Testis (tissue), 5 donors: ENCODE measurements at regions of chr11 and their contacts with region 1.

Region 1: GRCh38 chr11:12893787-12894672 is 115.1 kb upstream of the RASSF10 start:
- DNase-seq: peak; percentile 71
- H3K4me3 ChIP-seq: no peak overlapping the region
- H3K27ac ChIP-seq: no peak overlapping the region
- H3K4me1 ChIP-seq: peaks cover 10% of the 10 kb centered on the region
- H3K27me3 ChIP-seq: no peaks in the 10 kb centered on the region
- CTCF ChIP-seq: peak; percentile 83 to 91 (median 90)
- POLR2A ChIP-seq: no peak

Region 2: GRCh38 chr11:12331239-12331874 is 562.7 kb before region 1 on chr11:
- intact Hi-C with region 1: loop called (anchors 5 kb)
- DNase-seq: peak; percentile 91
- H3K4me3 ChIP-seq: no peak overlapping the region
- H3K27ac ChIP-seq: no peak overlapping the region
- H3K4me1 ChIP-seq: peaks cover 2% of the 10 kb centered on the region
- H3K27me3 ChIP-seq: no peaks in the 10 kb centered on the region
- CTCF ChIP-seq: peak; percentile 65 to 82 (median 72)
- POLR2A ChIP-seq: no peak

Region 3: GRCh38 chr11:12724301-12725046 is 169.6 kb before region 1 on chr11:
- intact Hi-C with region 1: no loop called
- DNase-seq: peak; percentile 81
- H3K4me3 ChIP-seq: no peak overlapping the region
- H3K27ac ChIP-seq: peak overlapping the region; percentile 36 to 63
- H3K4me1 ChIP-seq: peaks cover 27% of the 10 kb centered on the region
- H3K27me3 ChIP-seq: no peaks in the 10 kb centered on the region
- CTCF ChIP-seq: no peak
- POLR2A ChIP-seq: no peak